Activated B cell treated with CpG ODN at 0.5 μM for 24 hours (primary cell): ENCODE measurements at regions of chr21 and their contacts with region 1.

Region 1: GRCh38 chr21:41167348-41168342 is at the start of gene BACE2:
- DNase-seq: peak; percentile 77
- ATAC-seq: peak; percentile 87
- H3K4me3 Mint-ChIP-seq: peak within 1 kb of the TSS; percentile 88
- H3K27ac Mint-ChIP-seq: peak within 1 kb of the TSS; percentile 69
- H3K4me1 Mint-ChIP-seq: peaks cover 26% of the 10 kb centered on the region
- H3K27me3 Mint-ChIP-seq: peaks cover 5% of the 10 kb centered on the region
- CTCF ChIP-seq: no peak
- total RNA-seq, gene BACE2: 13.0 and 17.1 TPM in 2 replicates

Region 2: GRCh38 chr21:39183237-39184007 is 1984.2 kb before region 1 on chr21 and contains the start of gene PSMG1:
- CTCF ChIA-PET with region 1: no interaction called
- POLR2A ChIA-PET with region 1: interaction called, 4 read pairs
- intact Hi-C with region 1: loop called (anchors 10 kb)
- DNase-seq: peak; percentile 97
- ATAC-seq: peak; percentile 91
- H3K4me3 Mint-ChIP-seq: peak within 1 kb of the TSS; percentile 98
- H3K27ac Mint-ChIP-seq: peak within 1 kb of the TSS; percentile 94
- H3K4me1 Mint-ChIP-seq: peaks cover 20% of the 10 kb centered on the region
- H3K27me3 Mint-ChIP-seq: no peaks in the 10 kb centered on the region
- CTCF ChIP-seq: no peak
- total RNA-seq, gene PSMG1: 23.7 and 28.4 TPM in 2 replicates

Region 3: GRCh38 chr21:41194918-41195695 is 27.5 kb after region 1 on chr21:
- CTCF ChIA-PET with region 1: interaction called, 13 read pairs
- POLR2A ChIA-PET with region 1: interaction called, 5 read pairs
- intact Hi-C with region 1: no loop called
- DNase-seq: no peak
- ATAC-seq: peak; percentile 94
- H3K4me3 Mint-ChIP-seq: peak overlapping the region; percentile 60
- H3K27ac Mint-ChIP-seq: peak overlapping the region; percentile 89
- H3K4me1 Mint-ChIP-seq: peaks cover 78% of the 10 kb centered on the region
- H3K27me3 Mint-ChIP-seq: no peaks in the 10 kb centered on the region
- CTCF ChIP-seq: no peak

Region 4: GRCh38 chr21:41369105-41369919 is 201.7 kb after region 1 on chr21:
- CTCF ChIA-PET with region 1: no interaction called
- POLR2A ChIA-PET with region 1: interaction called, 8 read pairs
- intact Hi-C with region 1: loop called (anchors 2 kb)
- DNase-seq: peak; percentile 51
- ATAC-seq: peak; percentile 47
- H3K4me3 Mint-ChIP-seq: peak overlapping the region; percentile 71
- H3K27ac Mint-ChIP-seq: peak overlapping the region; percentile 85
- H3K4me1 Mint-ChIP-seq: peaks cover 72% of the 10 kb centered on the region
- H3K27me3 Mint-ChIP-seq: no peaks in the 10 kb centered on the region
- CTCF ChIP-seq: no peak

Region 5: GRCh38 chr21:41460578-41461527 is 293.2 kb after region 1 on chr21:
- CTCF ChIA-PET with region 1: interaction called, 3 read pairs
- POLR2A ChIA-PET with region 1: no interaction called
- intact Hi-C with region 1: loop called (anchors 1 kb)
- DNase-seq: peak; percentile 39
- ATAC-seq: peak; percentile 80
- H3K4me3 Mint-ChIP-seq: no peak overlapping the region
- H3K27ac Mint-ChIP-seq: peak overlapping the region; percentile 0
- H3K4me1 Mint-ChIP-seq: peaks cover 21% of the 10 kb centered on the region
- H3K27me3 Mint-ChIP-seq: no peaks in the 10 kb centered on the region
- CTCF ChIP-seq: peak; percentile 39